ENCODE measurements at regions of chr5 and their contacts with region 1.

Region 1: GRCh38 chr5:71475788-71476384 is 20.4 kb downstream of the BDP1 start:
- DNase-seq: no peak
- ATAC-seq: no peak
- H3K4me3 ChIP-seq: no peak overlapping the region
- H3K27ac ChIP-seq: no peak overlapping the region
- H3K4me1 ChIP-seq: no peaks in the 10 kb centered on the region
- H3K27me3 ChIP-seq: no peaks in the 10 kb centered on the region

Region 2: GRCh38 chr5:71757590-71758543 is 282.0 kb after region 1 on chr5:
- intact Hi-C with region 1: loop called in 1 of 2 experiments (anchors 10 kb)
- DNase-seq: peak; percentile 64 to 75
- ATAC-seq: peak; percentile 91
- H3K4me3 ChIP-seq: no peak overlapping the region
- H3K27ac ChIP-seq: no peak overlapping the region
- H3K4me1 ChIP-seq: no peaks in the 10 kb centered on the region
- H3K27me3 ChIP-seq: no peaks in the 10 kb centered on the region